PC-9 (cell line): ENCODE measurements at regions of chr5 and their contacts with region 1.

Region 1: DNA sequence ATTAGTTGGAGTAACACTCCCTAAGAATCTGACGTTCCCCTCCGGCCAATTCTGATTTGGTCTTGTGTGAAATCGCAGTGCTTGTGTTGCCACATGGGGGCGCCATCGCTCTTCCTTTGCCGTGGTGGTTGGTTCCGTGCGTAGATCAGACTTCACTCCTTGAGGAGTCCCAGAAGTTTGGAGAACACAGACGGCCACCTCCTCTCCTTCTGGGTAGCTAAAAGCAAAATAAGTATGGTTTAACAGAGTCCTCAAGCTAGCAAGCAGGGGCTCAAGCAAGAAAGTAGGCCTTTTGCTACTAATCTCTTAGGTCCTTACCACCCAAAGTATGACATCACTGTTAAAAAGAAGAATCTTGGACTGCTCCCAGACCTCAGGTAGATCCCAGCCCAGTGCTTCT is 59.5 kb downstream of the HSPA4 start:
- DNase-seq: peak; percentile 74 to 75
- H3K4me3 ChIP-seq: no peak overlapping the region
- H3K27ac ChIP-seq: no peak overlapping the region
- H3K4me1 ChIP-seq: no peaks in the 10 kb centered on the region; the same call in 1 of the 2 replicates
- H3K27me3 ChIP-seq: no peaks in the 10 kb centered on the region
- CTCF ChIP-seq: peak; percentile 96

Region 2: GRCh38 chr5:132704875-132705274 is 406.4 kb before region 1 on chr5:
- CTCF ChIA-PET with region 1: no interaction called
- POLR2A ChIA-PET with region 1: no interaction called
- intact Hi-C with region 1: no loop called
- DNase-seq: no peak
- H3K4me3 ChIP-seq: no peak overlapping the region
- H3K27ac ChIP-seq: no peak overlapping the region
- H3K4me1 ChIP-seq: no peaks in the 10 kb centered on the region
- H3K27me3 ChIP-seq: no peaks in the 10 kb centered on the region
- CTCF ChIP-seq: no peak

Region 3: DNA sequence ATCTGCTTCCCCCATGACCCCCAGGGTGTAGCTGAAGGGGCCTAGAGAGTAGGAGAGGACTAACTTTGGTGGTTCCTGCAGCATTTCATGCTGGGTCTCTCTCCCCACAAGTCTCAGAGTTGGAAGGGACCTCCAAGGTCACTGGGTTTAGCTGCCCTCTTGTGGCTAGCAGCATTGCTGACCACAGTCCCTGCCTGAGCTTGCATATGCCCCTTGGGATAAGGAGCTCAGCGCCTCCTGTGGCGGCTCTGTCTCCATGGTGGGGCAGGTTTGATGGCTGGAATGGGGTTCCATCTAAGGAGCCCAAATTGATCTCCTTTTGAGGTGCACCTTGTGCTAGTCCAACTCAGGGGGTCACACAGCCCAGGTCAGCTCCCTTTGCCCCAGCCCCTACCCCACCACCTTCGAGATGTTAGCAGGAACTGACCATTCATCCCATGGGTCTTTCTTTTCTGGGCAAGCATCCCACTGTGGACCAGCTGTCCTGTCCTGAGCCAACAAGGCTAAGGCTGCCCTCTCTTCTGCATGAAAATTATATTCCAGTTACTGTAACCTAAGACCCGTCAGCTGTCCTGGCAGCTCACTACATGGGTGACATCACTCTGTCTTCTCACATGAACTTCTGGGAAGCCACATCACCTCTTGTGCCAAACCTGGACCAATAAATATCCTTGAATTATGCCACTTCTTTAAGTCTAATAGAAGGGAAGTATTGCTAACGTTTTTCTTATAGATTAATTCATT is 136.8 kb after region 1 on chr5:
- CTCF ChIA-PET with region 1: no interaction called
- POLR2A ChIA-PET with region 1: no interaction called
- intact Hi-C with region 1: loop called (anchors 5 kb)
- DNase-seq: peak; percentile 11 to 47
- H3K4me3 ChIP-seq: no peak overlapping the region
- H3K27ac ChIP-seq: no peak overlapping the region
- H3K4me1 ChIP-seq: peaks cover 33% of the 10 kb centered on the region
- H3K27me3 ChIP-seq: no peaks in the 10 kb centered on the region
- CTCF ChIP-seq: peak; percentile 48; the same call in 1 of the 2 replicates

Region 4: GRCh38 chr5:133287500-133287899 is 176.2 kb after region 1 on chr5:
- CTCF ChIA-PET with region 1: no interaction called
- POLR2A ChIA-PET with region 1: no interaction called
- intact Hi-C with region 1: loop called (anchors 1 kb)
- DNase-seq: no peak
- H3K4me3 ChIP-seq: no peak overlapping the region
- H3K27ac ChIP-seq: no peak overlapping the region
- H3K4me1 ChIP-seq: peaks cover 66% of the 10 kb centered on the region
- H3K27me3 ChIP-seq: no peaks in the 10 kb centered on the region
- CTCF ChIP-seq: peak; percentile 60

Region 5: DNA sequence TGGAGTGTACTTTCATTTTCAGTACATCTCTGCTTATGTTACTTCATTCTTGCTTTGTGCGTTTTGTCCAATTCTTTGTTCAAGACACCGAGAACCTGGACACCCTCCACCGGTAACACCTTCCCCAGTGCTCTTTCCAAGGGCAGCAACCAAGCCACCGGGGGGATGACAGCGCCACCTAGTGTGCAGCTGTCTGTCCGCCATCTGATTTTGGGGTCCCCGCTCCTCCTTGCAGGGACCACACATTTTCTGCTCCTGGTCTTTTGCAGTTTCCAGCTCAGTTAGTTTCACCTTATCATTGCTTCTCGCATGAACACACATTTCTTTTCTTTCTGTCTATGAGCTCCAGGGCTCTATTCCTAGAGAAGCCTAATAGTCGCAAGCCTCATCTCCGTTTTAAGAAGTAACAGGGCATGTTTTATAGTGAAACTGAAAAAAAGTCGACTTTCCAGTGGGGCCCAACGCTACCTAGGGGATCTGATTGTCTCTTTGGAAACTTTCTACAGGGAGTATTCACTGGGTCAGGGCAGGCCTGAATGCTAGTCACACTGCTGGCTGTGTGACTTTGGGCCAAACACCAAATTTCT is 349.0 kb after region 1 on chr5:
- CTCF ChIA-PET with region 1: no interaction called
- POLR2A ChIA-PET with region 1: no interaction called
- intact Hi-C with region 1: loop called (anchors 1 kb)
- DNase-seq: peak in 1 of 2 experiments; percentile 21
- H3K4me3 ChIP-seq: no peak overlapping the region
- H3K27ac ChIP-seq: no peak overlapping the region
- H3K4me1 ChIP-seq: peaks cover 45% of the 10 kb centered on the region
- H3K27me3 ChIP-seq: no peaks in the 10 kb centered on the region
- CTCF ChIP-seq: peak; percentile 66

Region 6: DNA sequence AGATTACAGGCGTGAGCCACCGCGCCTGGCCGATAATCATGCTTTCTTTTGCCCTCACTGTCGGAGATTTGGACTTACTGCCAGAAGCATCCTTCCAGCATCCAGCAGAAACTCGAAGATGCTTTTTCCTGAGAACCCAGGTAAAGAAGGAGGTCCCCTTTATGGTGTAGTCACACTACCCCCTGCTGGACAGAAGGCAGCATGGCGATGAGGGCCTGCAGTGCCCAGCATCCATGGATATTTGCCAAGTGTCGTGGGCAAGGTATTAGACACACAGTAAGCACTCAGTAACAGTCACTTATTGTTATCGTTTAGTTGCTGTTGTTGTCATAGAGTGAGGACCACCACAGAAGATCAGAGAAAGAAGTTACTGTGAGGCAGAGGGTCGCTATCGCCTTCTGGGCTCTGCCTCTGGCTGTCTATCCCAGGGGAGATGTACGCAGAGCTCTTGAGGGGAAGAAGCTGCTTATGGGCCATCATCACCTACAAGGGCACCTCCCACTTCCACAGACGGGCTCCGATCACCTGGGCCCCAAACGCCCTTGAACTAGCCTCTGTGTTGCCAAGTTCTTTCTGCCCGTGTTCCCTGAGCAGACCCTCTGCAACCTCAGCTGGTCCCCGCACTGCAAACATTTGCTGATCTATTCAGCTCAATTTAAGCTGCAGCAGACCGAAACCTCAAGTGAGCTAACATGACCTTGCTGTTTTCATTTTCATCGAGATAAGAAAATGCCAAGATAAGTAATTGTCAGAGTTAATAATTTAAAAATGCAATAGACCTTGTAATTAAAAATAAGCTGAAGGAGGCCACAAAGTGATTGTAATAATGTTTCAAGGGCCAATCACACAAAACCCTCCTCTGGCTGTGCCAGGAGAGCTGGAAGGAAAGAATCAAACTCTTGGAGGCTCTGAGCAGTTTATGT is 833.2 kb after region 1 on chr5:
- CTCF ChIA-PET with region 1: no interaction called
- POLR2A ChIA-PET with region 1: no interaction called
- intact Hi-C with region 1: loop called (anchors 1 kb)
- DNase-seq: peak; percentile 41 to 70
- H3K4me3 ChIP-seq: no peak overlapping the region
- H3K27ac ChIP-seq: no peak overlapping the region
- H3K4me1 ChIP-seq: peaks cover 28% of the 10 kb centered on the region
- H3K27me3 ChIP-seq: no peaks in the 10 kb centered on the region
- CTCF ChIP-seq: peak; percentile 91

Region 7: DNA sequence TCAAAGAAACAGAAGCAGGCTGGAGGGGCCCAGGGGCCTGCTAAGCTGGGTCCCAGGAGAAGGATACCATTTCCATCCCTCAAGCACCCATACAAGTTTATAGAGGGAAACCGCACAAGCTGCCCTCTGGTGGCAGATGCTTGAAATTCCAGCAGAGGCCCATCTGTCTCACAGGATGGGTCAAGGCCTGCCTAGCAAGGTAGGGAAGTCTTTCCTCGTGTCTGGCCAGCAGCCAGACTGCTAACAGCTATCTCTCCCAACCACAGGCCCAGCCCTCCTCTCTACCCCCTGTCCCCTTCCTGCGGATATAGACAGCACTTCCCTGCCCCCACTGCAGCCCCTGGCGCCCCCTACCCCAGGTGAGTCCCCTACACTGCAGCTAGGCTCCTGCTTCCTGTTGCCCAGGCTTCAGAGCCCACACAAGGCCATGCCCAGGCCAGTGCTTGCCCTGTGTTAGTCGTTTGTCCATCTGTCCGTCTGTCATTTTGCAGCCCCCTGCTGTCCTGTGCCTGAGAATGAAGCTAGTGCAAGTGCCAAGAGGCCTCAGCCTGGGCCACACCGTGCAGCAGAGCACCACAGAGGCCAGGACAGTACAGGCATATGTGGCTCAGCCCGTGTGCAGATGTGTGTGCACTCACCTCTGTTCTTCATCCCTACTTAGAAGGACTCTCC is 1029.4 kb after region 1 on chr5:
- CTCF ChIA-PET with region 1: no interaction called
- POLR2A ChIA-PET with region 1: no interaction called
- intact Hi-C with region 1: loop called (anchors 5 kb)
- DNase-seq: peak; percentile 72 to 73
- H3K4me3 ChIP-seq: no peak overlapping the region
- H3K27ac ChIP-seq: no peak overlapping the region
- H3K4me1 ChIP-seq: peaks cover 21% of the 10 kb centered on the region
- H3K27me3 ChIP-seq: no peaks in the 10 kb centered on the region
- CTCF ChIP-seq: peak; percentile 83